Vagina (tissue), 2 donors: ENCODE measurements at regions of chr17 and their contacts with region 1.

Region 1: GRCh38 chr17:2383628-2384167 is 17.2 kb downstream of the MNT start:
- DNase-seq: no peak
- H3K4me3 ChIP-seq: no peak overlapping the region
- H3K27ac ChIP-seq: peak overlapping the region; percentile 56
- H3K4me1 ChIP-seq: peaks cover 16% of the 10 kb centered on the region
- H3K27me3 ChIP-seq: no peaks in the 10 kb centered on the region
- CTCF ChIP-seq: no peak
- POLR2A ChIP-seq: no peak

Region 2: DNA sequence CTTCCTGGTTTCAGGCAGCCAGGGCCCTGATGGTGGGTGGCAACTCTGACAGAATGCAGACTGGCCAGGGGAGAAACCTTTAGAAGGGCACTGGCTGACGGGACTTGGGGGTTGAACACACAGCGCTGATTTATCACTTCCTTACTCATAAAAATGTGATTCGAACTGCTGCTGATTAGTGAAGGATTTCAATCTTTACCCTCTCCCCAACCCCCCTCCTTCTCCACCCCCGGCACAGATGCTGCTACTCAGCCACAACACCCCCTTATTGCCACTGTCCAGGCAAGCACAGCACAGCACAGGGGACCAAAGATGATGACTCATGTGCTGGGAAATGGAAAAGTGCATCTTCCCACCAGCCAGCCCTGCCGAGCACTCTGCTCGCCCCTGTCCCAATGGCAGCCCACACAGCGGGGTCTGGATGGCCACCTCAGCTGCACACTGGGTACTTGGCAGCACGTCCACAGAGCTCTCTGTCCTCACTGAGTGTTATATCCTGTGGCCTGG is 150.2 kb before region 1 on chr17:
- intact Hi-C with region 1: no loop called
- DNase-seq: no peak
- H3K4me3 ChIP-seq: no peak overlapping the region
- H3K27ac ChIP-seq: peak overlapping the region; percentile 60
- H3K4me1 ChIP-seq: peaks cover 75% of the 10 kb centered on the region
- H3K27me3 ChIP-seq: no peaks in the 10 kb centered on the region
- CTCF ChIP-seq: no peak
- POLR2A ChIP-seq: no peak

Region 3: GRCh38 chr17:2416010-2416734 is 32.5 kb after region 1 on chr17:
- intact Hi-C with region 1: loop called (anchors 2 kb)
- DNase-seq: no peak
- H3K4me3 ChIP-seq: no peak overlapping the region
- H3K27ac ChIP-seq: peak overlapping the region; percentile 66
- H3K4me1 ChIP-seq: peaks cover 19% of the 10 kb centered on the region
- H3K27me3 ChIP-seq: no peaks in the 10 kb centered on the region
- CTCF ChIP-seq: peak; percentile 93 to 98 (median 96)
- POLR2A ChIP-seq: no peak

Region 4: DNA sequence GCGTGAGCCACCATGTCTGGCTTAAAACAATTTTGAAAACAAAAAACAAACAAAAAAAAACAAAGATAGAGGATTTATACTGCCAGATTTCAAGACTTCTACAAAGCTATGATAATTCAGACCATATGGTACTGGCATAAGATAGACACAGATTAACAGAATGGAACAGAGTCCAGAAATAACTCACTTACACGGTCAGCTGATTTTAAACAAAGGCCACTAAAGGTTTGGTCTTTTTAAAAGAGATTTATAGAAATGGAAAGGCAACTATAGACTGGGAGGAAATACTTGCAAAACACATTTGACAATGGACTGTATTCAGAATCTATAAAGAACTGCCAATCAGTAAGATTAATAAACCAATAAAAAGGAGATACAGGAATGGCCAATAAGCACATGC is 65.8 kb after region 1 on chr17:
- intact Hi-C with region 1: no loop called
- DNase-seq: no peak
- H3K4me3 ChIP-seq: no peak overlapping the region
- H3K27ac ChIP-seq: no peak overlapping the region
- H3K4me1 ChIP-seq: no peaks in the 10 kb centered on the region
- H3K27me3 ChIP-seq: no peaks in the 10 kb centered on the region
- CTCF ChIP-seq: no peak
- POLR2A ChIP-seq: no peak